Activated CD4-positive, alpha-beta T cell treated with anti-CD3 and anti-CD28 coated beads, Interleukin-2, amount 10 ng/mL, durations not matched to agents 24 days and 14 days (primary cell): ENCODE measurements at regions of chr21 and their contacts with region 1.

Region 1: GRCh38 chr21:38897532-38898422 is 92.0 kb downstream of the ETS2 start:
- DNase-seq: peak; percentile 18
- H3K4me3 Mint-ChIP-seq: no peak overlapping the region
- H3K27ac Mint-ChIP-seq: no peak overlapping the region
- H3K4me1 Mint-ChIP-seq: peaks cover 2% of the 10 kb centered on the region
- H3K27me3 Mint-ChIP-seq: peaks cover 6% of the 10 kb centered on the region

Region 2: GRCh38 chr21:38831526-38832467 is 66.0 kb before region 1 on chr21:
- intact Hi-C with region 1: loop called (anchors 10 kb)
- DNase-seq: peak; percentile 85
- H3K4me3 Mint-ChIP-seq: no peak overlapping the region
- H3K27ac Mint-ChIP-seq: peak overlapping the region; percentile 35
- H3K4me1 Mint-ChIP-seq: peaks cover 15% of the 10 kb centered on the region
- H3K27me3 Mint-ChIP-seq: peaks cover 6% of the 10 kb centered on the region

Region 3: DNA sequence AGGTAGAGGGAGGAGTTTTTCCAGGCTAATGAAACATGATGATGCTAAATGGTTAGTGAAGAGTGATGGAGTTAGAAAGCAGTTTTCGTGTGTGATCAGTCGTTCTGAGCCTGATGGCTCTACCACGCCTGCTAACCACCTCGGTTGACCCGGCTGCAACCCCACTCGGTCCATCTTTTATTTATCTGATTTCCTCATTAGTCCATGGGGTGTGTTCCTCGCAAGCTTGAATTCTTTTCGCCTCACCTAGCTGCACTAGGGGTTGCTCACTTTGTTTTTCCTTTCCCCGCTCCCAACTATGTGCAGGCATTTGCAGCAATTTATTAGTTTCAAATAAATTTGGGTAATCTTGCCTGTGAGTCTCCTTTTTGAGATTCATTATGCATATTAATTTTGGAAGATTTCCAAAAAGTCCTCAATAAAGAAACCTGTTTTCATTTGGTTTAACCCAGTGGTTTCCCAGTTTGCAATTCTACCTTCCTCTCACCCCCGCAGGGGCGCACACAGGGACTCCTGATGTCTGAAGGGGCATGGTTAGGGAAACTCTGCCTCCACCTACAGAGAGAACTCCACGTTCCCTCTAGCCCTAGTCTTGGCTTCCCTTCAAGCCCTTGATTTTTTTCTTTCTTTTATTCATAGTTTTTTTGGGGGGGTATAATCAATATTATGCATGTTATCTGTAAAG is 727.6 kb after region 1 on chr21:
- intact Hi-C with region 1: no loop called
- DNase-seq: no peak
- H3K4me3 Mint-ChIP-seq: no peak overlapping the region
- H3K27ac Mint-ChIP-seq: no peak overlapping the region
- H3K4me1 Mint-ChIP-seq: no peaks in the 10 kb centered on the region
- H3K27me3 Mint-ChIP-seq: peaks cover 1% of the 10 kb centered on the region